ENCODE measurements at regions of chr1 and their contacts with region 1.

Region 1: DNA sequence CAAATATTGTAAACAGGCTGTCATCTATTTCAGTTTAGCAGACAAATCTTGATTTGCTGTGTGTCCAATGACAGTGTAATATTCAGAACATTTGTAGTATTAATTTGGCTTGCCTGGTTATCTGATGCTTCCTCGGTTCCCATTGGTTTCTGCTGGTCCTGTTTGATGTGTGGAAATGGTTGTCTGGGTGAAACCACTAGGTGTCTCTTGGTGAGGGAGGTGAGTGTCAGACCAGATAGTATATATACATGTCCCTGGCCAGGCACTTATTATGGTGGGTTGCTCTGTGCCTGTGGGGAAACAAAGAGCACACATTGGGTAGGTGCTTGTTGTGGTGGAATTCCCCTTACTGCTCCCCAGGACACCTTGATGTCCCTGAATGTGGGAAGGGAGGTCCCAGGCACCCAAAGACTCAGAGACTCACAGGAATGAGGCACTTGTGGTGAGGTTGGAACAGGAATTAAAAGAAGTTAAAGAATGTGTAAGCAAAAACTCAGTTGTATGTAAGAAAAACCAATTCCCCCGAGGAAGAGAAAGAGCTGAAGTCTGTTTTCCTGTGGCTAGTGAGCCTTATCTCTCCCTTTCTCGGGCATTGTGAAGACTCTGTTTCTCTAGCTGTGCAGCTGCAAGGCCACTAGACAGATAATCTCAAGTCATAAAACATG is 1519.1 kb downstream of the BRINP3 start:
- DNase-seq: no peak
- H3K4me3 ChIP-seq: no peak overlapping the region
- H3K27ac ChIP-seq: no peak overlapping the region
- H3K4me1 ChIP-seq: no peaks in the 10 kb centered on the region
- H3K27me3 ChIP-seq: no peaks in the 10 kb centered on the region
- CTCF ChIP-seq: no peak

Region 2: GRCh38 chr1:188941986-188942385 is 16.6 kb before region 1 on chr1:
- CTCF ChIA-PET with region 1: no interaction called
- POLR2A ChIA-PET with region 1: no interaction called
- intact Hi-C with region 1: loop called (anchors 1 kb)
- DNase-seq: no peak
- H3K4me3 ChIP-seq: no peak overlapping the region
- H3K27ac ChIP-seq: no peak overlapping the region
- H3K4me1 ChIP-seq: no peaks in the 10 kb centered on the region
- H3K27me3 ChIP-seq: no peaks in the 10 kb centered on the region
- CTCF ChIP-seq: no peak

Region 3: DNA sequence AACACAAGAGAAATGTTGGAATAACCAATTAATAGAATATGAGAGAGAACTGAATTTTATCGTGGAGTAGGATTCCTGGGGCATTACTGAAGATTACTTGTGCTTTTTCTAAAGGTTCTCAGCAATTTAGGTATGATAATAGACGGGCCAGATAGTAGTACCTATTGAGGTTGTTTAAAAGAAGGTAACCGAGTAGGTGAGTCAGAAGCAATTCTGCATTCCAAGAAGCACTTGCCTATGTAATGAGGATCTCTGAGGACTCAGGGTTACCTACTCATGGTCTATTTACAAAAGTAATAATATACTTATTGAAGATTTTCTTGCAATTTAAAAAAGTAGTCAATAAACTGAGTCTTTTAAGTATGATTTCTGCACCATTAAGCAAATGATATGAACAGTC is 49.2 kb after region 1 on chr1:
- CTCF ChIA-PET with region 1: no interaction called
- POLR2A ChIA-PET with region 1: no interaction called
- intact Hi-C with region 1: no loop called
- DNase-seq: no peak
- H3K4me3 ChIP-seq: no peak overlapping the region
- H3K27ac ChIP-seq: no peak overlapping the region
- H3K4me1 ChIP-seq: no peaks in the 10 kb centered on the region
- H3K27me3 ChIP-seq: no peaks in the 10 kb centered on the region
- CTCF ChIP-seq: no peak

Region 4: DNA sequence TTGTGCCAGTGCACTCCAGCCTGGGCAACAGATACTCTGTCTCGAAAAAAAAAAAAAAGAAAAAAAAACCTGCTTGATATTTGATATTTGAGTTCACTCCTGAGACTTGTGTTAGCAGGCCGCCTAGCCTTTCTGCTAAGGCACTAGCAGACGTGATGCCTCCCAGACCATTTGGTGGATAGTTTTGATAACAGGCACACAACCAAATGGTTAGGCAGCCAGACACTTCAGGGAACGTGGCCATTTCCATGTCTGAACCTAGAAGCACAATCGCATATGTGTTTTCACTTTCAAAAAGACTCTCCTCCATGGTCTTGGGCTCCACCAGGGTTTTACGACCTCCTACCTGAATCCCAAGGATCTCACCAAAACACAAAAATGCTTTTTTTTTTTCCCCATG is 199.6 kb after region 1 on chr1:
- CTCF ChIA-PET with region 1: no interaction called
- POLR2A ChIA-PET with region 1: no interaction called
- intact Hi-C with region 1: no loop called
- DNase-seq: no peak
- H3K4me3 ChIP-seq: no peak overlapping the region
- H3K27ac ChIP-seq: no peak overlapping the region
- H3K4me1 ChIP-seq: no peaks in the 10 kb centered on the region
- H3K27me3 ChIP-seq: no peaks in the 10 kb centered on the region
- CTCF ChIP-seq: no peak

Measured in PC-9 (cell line).